ENCODE measurements at regions of chr10 and their contacts with region 1.

Region 1: DNA sequence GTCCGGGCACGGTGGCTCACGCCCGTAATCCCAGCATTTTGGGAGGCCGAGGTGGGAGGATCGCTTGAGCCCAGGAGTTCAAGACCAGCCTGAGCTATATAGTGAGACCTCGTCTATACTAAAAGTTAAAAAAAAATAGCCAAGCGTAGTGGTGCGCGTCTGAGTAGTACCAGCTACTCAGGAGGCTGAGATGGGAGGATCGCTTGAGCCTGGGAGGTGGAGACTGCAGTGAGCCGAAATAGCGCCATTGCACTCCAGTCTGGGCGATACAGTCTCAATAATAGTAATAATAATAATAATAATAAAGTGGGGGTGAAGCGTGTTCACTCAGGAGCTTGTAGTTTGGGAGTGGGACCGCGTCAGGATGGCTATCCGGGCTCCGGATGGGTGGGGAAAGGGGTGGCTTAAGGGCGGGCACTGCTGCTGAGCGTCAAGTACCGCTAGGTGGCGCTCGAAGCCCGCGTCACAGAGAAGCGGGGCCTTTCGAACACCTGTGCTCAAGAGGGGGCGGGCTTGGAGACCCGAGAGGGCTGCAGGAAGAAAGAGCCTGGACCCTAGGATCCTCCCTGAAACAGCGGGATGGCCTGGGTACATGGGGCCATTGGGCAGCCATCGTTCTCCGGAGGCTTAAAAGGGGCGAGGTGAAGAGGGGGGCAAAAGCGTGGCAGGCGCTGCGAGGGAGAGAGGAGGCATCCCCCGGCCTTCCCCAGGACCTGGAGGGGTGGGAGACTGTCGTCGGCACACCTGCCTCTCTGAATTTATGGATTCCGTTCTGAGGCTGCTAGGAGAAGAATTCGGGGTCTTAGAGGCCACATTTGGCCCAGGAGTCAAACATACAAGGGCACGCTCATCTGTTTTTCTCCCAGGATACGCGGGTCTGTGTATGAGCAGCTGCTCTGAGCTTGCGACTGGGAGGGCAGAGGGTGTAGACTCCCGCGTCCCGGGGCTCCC is 14.5 kb downstream of the LBX1 start:
- DNase-seq: peak; percentile 84
- H3K4me3 ChIP-seq: peak overlapping the region; percentile 19 to 67; a peak in 3 of 4 replicates
- H3K27ac ChIP-seq: no peak overlapping the region
- H3K4me1 ChIP-seq: peaks cover 0 to 35% of the 10 kb centered on the region in 2 experiments; a peak in 2 of 4 replicates
- H3K27me3 ChIP-seq: peaks cover 86% of the 10 kb centered on the region
- CTCF ChIP-seq: peak; percentile 93
- EP300 ChIP-seq: no peak
- RAD21 ChIP-seq: peak; percentile 77

Region 2: DNA sequence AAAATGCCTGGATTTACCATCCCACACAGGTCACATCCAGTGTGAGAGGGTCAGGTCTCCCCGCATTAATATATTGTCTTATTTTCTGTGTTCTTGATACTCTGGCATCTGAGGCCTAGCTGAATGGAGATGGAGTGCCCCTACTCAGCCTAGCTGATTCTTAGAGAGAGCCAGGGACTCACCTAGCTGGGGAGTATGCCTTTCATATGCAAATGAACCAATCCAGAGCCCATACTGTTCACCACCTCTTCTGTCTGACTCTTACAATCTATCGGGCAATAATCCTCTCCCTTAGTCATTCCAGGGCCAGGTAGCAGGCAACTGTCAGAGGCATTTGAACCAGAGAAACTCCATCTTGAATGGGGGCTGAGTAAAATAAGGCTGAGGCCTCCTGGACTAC is 31.8 kb before region 1 on chr10:
- CTCF ChIA-PET with region 1: interaction called, 12 read pairs
- POLR2A ChIA-PET with region 1: no interaction called
- DNase-seq: no peak
- H3K4me3 ChIP-seq: no peak overlapping the region
- H3K27ac ChIP-seq: no peak overlapping the region
- H3K4me1 ChIP-seq: no peaks in the 10 kb centered on the region
- H3K27me3 ChIP-seq: peaks cover 18% of the 10 kb centered on the region; the same call in 1 of the 2 replicates
- CTCF ChIP-seq: no peak
- EP300 ChIP-seq: no peak
- RAD21 ChIP-seq: no peak

Region 3: GRCh38 chr10:101272229-101272868 is 57.6 kb after region 1 on chr10:
- CTCF ChIA-PET with region 1: interaction called, 33 read pairs
- POLR2A ChIA-PET with region 1: no interaction called
- DNase-seq: peak; percentile 83
- H3K4me3 ChIP-seq: no peak overlapping the region
- H3K27ac ChIP-seq: no peak overlapping the region
- H3K4me1 ChIP-seq: no peaks in the 10 kb centered on the region; a peak in 1 of 4 replicates
- H3K27me3 ChIP-seq: peaks cover 8% of the 10 kb centered on the region; the same call in 1 of the 2 replicates
- CTCF ChIP-seq: peak; percentile 76
- EP300 ChIP-seq: no peak
- RAD21 ChIP-seq: peak; percentile 66

Region 4: DNA sequence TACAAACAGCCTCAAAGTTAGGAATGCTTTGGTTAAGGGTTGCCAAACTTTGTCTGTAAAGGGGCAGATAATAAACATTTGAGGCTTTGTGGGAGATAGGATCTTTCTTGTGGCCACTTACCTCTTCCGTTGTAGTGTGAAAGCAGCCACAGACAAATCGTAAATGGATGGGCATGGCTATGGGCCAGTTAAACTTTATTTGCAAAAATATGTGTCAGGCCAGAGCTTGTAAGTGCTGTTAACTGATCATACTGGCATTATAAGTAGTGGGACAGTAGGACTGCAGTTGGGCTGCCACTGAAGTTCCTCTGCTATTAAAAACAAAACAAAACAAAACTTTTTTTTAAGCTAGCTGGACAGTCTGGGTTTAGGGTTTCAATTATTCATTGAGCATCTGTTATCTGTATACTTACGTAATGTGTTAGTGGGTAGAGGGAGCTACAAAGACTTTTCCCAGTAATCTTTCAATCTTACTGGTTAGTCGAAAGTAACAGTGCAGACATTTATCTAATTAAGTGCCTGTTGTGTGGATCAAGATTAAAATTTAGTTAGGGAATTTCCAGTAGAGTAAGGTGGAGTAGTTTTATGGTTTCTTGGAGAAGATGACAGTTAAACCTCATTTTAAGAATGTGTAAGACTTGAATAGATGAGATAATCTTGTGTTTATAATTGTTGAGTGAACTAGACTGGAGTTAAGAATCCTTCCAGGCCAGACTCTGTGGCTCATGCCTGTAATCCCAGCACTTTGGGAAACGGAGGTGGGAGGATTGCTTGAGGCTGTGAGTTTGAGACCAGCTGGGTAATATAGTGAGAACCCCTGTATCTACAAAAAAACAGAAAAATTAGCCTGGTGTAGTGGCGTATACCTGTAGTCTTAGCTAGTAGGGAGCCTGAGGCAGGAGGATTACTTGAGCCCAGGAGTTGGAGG is 239.3 kb after region 1 on chr10:
- CTCF ChIA-PET with region 1: interaction called, 10 read pairs
- POLR2A ChIA-PET with region 1: no interaction called
- DNase-seq: no peak
- H3K4me3 ChIP-seq: no peak overlapping the region
- H3K27ac ChIP-seq: peak overlapping the region in 1 of 2 experiments; percentile 12; a peak in 1 of 4 replicates
- H3K4me1 ChIP-seq: peaks cover 0 to 34% of the 10 kb centered on the region in 2 experiments; a peak in 2 of 4 replicates
- H3K27me3 ChIP-seq: no peaks in the 10 kb centered on the region
- CTCF ChIP-seq: no peak
- EP300 ChIP-seq: no peak
- RAD21 ChIP-seq: no peak

Region 5: GRCh38 chr10:101558202-101558601 is 343.5 kb after region 1 on chr10:
- CTCF ChIA-PET with region 1: interaction called, 17 read pairs
- POLR2A ChIA-PET with region 1: no interaction called
- DNase-seq: no peak
- H3K4me3 ChIP-seq: no peak overlapping the region
- H3K27ac ChIP-seq: peak overlapping the region in 1 of 2 experiments; percentile 95; a peak in 1 of 4 replicates
- H3K4me1 ChIP-seq: peaks cover 0 to 50% of the 10 kb centered on the region in 2 experiments; a peak in 1 of 4 replicates
- H3K27me3 ChIP-seq: no peaks in the 10 kb centered on the region
- CTCF ChIP-seq: no peak
- EP300 ChIP-seq: no peak
- RAD21 ChIP-seq: no peak

Region 6: DNA sequence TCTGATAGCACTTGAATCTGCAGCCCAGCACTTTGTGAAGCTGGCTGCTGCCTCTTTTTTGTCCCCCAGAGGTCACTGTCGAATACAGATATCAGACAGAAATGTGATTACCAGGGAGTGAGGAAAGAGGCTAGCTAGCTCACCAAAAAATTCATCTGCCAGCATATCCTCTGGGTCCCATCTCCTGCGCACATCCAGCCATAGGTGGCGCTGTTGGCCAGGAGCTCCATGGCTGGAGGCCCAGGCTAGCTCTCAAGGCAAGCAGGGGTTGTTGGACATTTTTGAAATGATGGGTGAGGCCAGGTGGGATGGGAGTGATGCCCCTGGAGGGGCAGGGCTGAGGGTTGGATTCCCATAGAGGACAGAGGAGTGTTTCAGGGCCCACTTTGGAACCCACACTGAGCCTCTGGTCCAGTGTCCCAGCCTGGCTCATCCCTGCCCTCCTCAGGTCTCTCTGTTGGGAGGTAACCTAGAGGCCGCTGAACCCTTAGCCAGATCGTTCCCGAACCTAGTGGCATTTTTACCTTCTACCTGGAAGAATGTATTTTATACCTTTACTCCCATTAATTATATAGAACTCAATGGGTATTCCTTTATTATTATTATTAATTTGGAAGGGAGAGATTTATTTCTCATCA is 388.2 kb after region 1 on chr10:
- CTCF ChIA-PET with region 1: interaction called, 46 read pairs
- POLR2A ChIA-PET with region 1: no interaction called
- DNase-seq: peak; percentile 84
- H3K4me3 ChIP-seq: peak overlapping the region in 1 of 2 experiments; percentile 24; a peak in 1 of 4 replicates
- H3K27ac ChIP-seq: no peak overlapping the region; a peak in 1 of 4 replicates
- H3K4me1 ChIP-seq: no peaks in the 10 kb centered on the region; a peak in 1 of 4 replicates
- H3K27me3 ChIP-seq: no peaks in the 10 kb centered on the region
- CTCF ChIP-seq: peak; percentile 90
- EP300 ChIP-seq: no peak
- RAD21 ChIP-seq: peak; percentile 92

Measured in SK-N-SH (cell line).